Activated naive CD4-positive, alpha-beta T cell treated with anti-CD3 and anti-CD28 coated beads for 36 hours (primary cell): ENCODE measurements at regions of chr14 and their contacts with region 1.

Region 1: DNA sequence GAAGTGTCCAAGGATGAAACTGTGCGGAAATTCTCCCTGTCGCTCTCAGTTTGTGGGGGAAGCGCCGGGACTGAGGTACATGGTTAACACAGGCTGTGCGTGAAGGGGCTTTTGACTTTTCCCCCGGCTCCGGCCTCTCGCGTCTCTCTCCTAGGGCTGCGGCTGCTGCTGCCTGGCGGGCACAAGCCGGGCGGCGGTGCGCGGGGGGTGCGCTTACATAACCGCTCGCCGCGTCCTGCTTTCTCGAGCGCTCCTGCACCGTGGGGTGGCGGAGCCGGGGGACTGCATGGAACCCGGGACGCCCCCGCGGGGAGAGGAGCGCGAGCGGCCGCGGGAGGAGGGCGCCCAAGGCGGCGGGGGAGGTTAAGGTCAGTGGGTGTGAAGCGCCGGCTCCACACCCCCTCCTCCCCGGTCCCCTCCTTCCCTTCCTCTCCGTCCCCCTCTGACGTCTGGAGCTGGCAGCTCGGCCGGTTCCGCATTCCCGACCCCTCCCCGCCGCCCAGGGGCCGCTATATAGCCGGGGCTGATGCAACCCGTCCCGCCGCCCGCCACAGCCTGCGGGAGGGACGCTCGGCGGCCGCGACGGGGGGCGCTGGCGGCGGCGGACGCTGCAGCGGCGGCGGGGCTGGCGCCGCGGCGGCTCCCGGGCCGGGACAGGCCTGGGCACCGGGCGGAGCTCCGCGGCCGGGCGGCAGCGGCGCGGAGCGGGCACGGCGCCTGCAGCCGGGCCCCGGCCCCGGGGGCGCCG is at the start of gene JDP2:
- DNase-seq: peak; percentile 53
- H3K4me3 Mint-ChIP-seq: peak within 1 kb of the TSS; percentile 73
- H3K27ac Mint-ChIP-seq: no peak within 1 kb of the TSS
- H3K4me1 Mint-ChIP-seq: peaks cover 17% of the 10 kb centered on the region
- H3K27me3 Mint-ChIP-seq: peaks cover 15% of the 10 kb centered on the region
- total RNA-seq, gene JDP2: 2.8 to 3.2 TPM

Region 2: DNA sequence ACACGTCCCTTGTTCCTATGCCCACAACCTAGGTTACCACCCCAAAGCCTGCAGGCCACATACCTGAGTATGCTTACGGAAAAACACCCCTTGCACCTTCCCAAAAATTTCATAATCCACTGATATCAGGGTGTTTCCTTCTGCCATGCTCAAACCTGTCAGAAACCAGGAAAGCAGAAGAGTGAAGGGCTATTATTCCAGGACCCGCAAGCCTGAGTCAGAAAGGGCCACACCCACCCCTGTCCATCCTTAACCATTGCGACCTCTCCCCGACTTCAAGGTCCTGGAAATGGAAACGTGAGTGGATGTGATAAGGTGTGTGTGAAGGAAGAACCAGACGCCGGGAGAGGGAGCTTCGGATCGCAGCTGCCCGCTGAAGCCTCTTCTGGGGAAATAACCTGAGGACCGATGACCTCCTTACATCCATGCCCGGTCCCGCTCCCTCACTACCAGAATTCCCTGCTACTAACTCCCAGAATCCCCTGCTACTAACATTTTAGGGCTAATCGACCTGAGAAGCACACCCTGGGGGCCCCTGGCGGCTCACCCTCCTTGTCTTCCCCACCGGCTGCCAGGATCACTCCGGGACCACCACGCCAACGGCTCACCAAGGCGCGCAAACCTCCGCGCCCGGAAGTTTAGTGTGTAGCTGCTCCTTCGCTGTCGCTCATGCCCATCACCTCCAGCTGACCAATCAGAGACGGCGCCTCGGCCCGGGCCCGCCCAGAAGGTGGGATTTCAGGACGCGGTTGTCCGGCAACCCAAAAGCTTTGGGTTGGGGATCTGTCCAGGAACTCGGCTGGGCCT is 364.0 kb before region 1 on chr14 and contains the start of gene ACYP1:
- CTCF ChIA-PET with region 1: no interaction called
- intact Hi-C with region 1: loop called (anchors 5 kb)
- DNase-seq: peak; percentile 96
- H3K4me3 Mint-ChIP-seq: peak within 1 kb of the TSS; percentile 99
- H3K27ac Mint-ChIP-seq: peak within 1 kb of the TSS; percentile 94
- H3K4me1 Mint-ChIP-seq: peaks cover 23% of the 10 kb centered on the region
- H3K27me3 Mint-ChIP-seq: no peaks in the 10 kb centered on the region
- total RNA-seq, gene ACYP1: 46.3 to 50.5 TPM

Region 3: DNA sequence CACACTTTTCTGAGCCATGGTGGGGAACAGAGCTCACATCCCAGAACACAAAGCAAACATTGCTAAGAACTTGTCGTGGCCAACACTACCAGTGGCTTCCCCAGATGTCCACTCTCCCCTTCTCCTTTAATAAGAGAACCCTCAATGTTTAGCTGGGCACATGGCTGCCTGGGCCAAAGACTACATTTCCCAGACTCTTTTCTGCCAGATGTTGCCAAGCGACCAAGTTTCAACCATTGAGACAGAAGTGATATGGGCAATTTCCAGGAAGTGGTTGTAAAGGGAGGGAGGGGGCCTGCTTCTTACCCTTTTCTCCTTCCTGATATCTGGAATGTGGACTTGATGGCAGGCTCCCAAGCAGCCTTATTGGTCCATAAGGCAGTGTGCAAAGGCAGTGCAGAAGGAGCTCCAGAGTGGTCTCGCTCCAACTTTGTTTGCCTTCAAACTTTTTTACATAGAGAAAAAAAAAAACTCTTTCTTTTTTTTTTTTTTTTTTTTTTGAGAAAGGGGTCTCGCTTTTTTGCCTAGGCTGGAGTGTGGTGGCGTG is 24.7 kb before region 1 on chr14:
- CTCF ChIA-PET with region 1: no interaction called
- intact Hi-C with region 1: no loop called
- DNase-seq: no peak
- H3K4me3 Mint-ChIP-seq: no peak overlapping the region
- H3K27ac Mint-ChIP-seq: no peak overlapping the region
- H3K4me1 Mint-ChIP-seq: peaks cover 9% of the 10 kb centered on the region
- H3K27me3 Mint-ChIP-seq: no peaks in the 10 kb centered on the region

Region 4: DNA sequence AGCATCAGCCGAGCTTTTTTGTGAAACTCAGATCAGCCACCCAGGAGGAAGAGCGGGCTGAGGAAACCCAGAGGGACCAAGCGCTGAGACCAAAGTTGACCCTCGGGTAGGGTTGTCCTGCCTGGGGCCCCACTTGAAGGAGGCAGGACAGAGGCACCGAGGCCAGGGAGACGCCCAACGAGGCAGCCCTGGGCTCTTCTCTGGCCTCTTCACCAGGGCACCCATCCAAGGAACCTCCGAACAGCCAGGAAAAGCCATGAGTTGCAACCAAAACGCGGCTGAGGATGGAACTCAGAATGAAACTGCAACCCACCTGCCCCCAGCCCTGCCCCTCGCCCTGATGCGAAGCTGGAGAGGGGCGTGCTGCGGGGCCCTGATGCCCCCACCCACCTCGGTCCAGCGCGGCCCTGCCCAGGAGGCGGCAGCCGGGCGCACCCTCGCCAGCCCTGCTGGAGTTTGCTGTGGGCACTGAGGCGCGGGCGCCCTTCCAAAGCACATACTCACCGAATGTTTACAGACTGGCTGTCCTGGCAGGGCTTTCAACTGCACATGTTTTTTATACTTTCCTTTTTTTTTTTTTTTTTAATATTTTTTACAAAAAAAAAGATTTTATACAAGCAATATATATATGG is 42.1 kb after region 1 on chr14:
- CTCF ChIA-PET with region 1: no interaction called
- intact Hi-C with region 1: no loop called
- DNase-seq: no peak
- H3K4me3 Mint-ChIP-seq: no peak overlapping the region
- H3K27ac Mint-ChIP-seq: no peak overlapping the region
- H3K4me1 Mint-ChIP-seq: no peaks in the 10 kb centered on the region
- H3K27me3 Mint-ChIP-seq: no peaks in the 10 kb centered on the region

Region 5: DNA sequence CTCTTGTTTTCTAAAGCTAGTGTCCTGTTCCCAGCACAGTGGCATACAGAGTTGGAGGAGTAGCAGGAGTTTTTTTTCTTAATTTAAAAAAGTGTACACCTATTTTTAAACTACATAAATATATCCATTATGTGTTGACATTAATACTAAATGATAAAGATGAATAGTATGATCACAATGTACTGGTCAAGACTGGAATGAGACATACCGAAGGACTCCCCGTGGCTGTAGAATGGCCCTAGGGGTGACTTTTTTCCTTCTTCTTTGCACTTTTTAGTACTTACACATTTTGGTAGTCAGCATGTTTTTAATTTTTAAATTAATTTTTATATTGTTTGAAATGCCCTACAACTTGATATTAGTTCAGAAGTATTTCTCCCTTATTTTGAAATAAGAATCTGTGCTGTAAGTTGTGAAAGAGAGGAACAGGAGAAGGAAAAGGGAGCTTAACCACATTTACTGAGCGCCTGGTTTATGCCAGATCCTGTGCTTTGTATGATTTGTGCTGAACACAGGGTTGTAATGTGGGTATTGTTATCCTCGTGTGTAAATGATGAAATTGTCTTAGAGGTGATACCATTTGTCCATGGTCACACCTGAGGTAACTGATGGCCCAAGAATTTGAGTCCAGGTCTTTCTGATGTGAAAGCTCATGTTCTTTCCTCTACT is 417.6 kb after region 1 on chr14:
- CTCF ChIA-PET with region 1: no interaction called
- intact Hi-C with region 1: no loop called
- DNase-seq: no peak
- H3K4me3 Mint-ChIP-seq: no peak overlapping the region
- H3K27ac Mint-ChIP-seq: no peak overlapping the region
- H3K4me1 Mint-ChIP-seq: no peaks in the 10 kb centered on the region
- H3K27me3 Mint-ChIP-seq: no peaks in the 10 kb centered on the region

Region 6: GRCh38 chr14:76022991-76023390 is 595.3 kb after region 1 on chr14:
- CTCF ChIA-PET with region 1: no interaction called
- intact Hi-C with region 1: no loop called
- DNase-seq: no peak
- H3K4me3 Mint-ChIP-seq: no peak overlapping the region
- H3K27ac Mint-ChIP-seq: no peak overlapping the region
- H3K4me1 Mint-ChIP-seq: no peaks in the 10 kb centered on the region
- H3K27me3 Mint-ChIP-seq: no peaks in the 10 kb centered on the region